ENCODE measurements at regions of chr17 and their contacts with region 1.

Region 1: DNA sequence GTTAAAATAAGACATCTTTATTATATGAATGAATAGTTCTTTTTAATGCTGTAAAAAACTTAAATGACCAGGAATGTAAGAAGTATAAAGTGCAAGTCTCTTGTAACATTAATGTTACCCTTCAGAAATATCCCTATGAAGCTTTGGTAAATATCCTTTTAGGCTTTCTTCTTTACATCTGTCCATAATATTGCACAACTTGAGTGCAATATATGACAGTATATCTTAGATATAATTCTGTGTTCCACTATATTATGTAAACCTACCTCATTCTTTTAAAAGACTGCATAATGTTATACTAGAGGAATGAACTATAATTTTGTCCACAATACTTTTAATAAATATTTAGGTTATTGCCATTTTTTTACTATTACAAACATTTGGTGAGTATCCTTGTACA is 81.1 kb downstream of the EFCAB13 start:
- DNase-seq: no peak
- H3K4me3 ChIP-seq: no peak overlapping the region
- H3K27ac ChIP-seq: no peak overlapping the region
- H3K4me1 ChIP-seq: no peaks in the 10 kb centered on the region
- H3K27me3 ChIP-seq: no peaks in the 10 kb centered on the region
- CTCF ChIP-seq: no peak

Region 2: DNA sequence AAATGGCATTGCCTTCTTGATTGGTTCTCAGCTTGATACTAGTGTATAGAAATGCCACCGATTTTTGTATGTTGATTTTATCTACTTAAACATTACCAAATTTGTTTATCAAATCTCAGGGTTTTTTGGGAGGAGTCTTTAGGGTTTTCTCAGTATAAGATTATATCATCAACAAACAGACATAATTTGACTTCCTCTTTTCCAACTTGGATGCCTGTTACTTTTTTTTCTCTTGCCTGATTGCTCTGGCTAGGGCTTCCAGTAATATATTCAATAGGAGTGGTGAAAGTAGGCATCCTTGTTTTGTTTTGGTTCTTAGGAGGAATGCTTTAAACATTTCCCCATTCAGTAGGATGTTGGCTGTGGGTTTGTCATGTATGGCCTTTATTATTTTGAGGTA is 52.0 kb before region 1 on chr17:
- intact Hi-C with region 1: loop called (anchors 5 kb)
- DNase-seq: no peak
- H3K4me3 ChIP-seq: no peak overlapping the region
- H3K27ac ChIP-seq: no peak overlapping the region
- H3K4me1 ChIP-seq: no peaks in the 10 kb centered on the region
- H3K27me3 ChIP-seq: no peaks in the 10 kb centered on the region
- CTCF ChIP-seq: no peak

Region 3: GRCh38 chr17:47831003-47831933 is 426.4 kb after region 1 on chr17 and contains the starts of genes LRRC46 and MRPL10:
- intact Hi-C with region 1: no loop called
- DNase-seq: peak; percentile 88 to 96
- H3K4me3 ChIP-seq: peak within 1 kb of the TSS; percentile 59 to 65
- H3K27ac ChIP-seq: peak within 1 kb of the TSS; percentile 69 to 77
- H3K4me1 ChIP-seq: peaks cover 4 to 21% (median 16%) of the 10 kb centered on the region in 4 donors
- H3K27me3 ChIP-seq: no peaks in the 10 kb centered on the region
- CTCF ChIP-seq: no peak